ENCODE measurements at regions of chr7 and their contacts with region 1.

Region 1: GRCh38 chr7:92652536-92652935 is 62.3 kb upstream of the FAM133B start:
- DNase-seq: peak in 1 of 2 experiments; percentile 81
- H3K4me3 ChIP-seq: no peak overlapping the region
- H3K27ac ChIP-seq: peak overlapping the region; percentile 28
- H3K4me1 ChIP-seq: peaks cover 18% of the 10 kb centered on the region
- H3K27me3 ChIP-seq: no peaks in the 10 kb centered on the region
- CTCF ChIP-seq: no peak

Region 2: DNA sequence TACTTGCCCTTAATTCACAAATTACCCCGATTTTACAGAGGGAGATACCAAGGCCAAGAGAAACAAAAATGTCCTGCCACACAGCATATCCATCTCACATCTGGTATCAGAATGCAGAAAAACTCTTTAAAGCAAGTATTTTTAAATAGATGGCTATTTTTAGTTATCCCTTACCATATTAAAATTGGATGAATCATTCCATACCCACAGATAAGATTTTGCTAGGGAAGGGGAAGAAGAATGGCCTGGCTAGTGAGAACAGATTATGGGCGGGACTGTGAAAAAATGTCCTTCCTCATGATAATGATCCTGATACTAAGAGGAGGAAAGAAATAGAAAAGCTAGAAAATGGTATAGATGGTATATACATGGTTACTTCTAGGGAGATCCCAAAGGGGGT is 285.8 kb before region 1 on chr7:
- CTCF ChIA-PET with region 1: no interaction called
- POLR2A ChIA-PET with region 1: no interaction called
- intact Hi-C with region 1: no loop called
- DNase-seq: no peak
- H3K4me3 ChIP-seq: no peak overlapping the region
- H3K27ac ChIP-seq: no peak overlapping the region
- H3K4me1 ChIP-seq: no peaks in the 10 kb centered on the region
- H3K27me3 ChIP-seq: no peaks in the 10 kb centered on the region
- CTCF ChIP-seq: no peak

Region 3: GRCh38 chr7:92641921-92642511 is 10.5 kb before region 1 on chr7:
- CTCF ChIA-PET with region 1: no interaction called
- POLR2A ChIA-PET with region 1: interaction called, 14 read pairs
- intact Hi-C with region 1: no loop called
- DNase-seq: no peak
- H3K4me3 ChIP-seq: no peak overlapping the region
- H3K27ac ChIP-seq: 0 out of 2 replicates have a peak overlapping the region, but pooled peaks have one; percentile 9
- H3K4me1 ChIP-seq: peaks cover 19% of the 10 kb centered on the region
- H3K27me3 ChIP-seq: no peaks in the 10 kb centered on the region
- CTCF ChIP-seq: no peak

Region 4: DNA sequence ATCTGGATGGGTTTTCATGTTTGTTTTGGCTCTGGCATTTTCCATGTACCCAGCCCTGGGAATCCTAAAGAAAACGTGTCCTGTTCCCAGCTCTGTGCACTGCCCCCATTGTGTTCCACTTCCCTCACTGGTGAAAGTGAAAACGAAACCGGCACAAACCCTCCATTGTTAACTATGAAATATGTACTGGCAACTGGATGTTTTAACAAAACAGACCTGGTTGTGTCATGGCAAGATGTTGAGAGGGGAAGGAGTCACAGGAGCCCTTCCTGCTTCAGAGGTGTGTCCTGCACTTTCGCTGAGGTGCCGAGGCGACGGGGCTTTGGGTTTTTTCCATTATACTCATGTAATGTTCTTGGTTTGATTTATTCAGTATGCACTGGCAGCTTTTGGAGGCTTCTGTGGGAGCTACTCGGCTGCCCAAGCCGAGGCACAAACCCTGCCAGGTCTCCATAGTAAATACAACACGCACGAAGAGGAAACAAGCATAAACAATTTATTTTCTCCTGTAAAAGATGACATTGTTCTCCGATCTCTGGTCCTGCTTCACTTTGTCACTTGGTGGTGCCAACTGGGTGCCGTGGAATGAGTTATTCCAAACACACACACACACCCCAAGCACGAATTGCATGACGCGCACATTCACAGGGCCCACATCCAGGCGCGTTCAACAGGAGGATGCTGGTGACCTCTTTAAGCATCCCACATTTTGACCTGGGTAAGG is 65.6 kb after region 1 on chr7:
- CTCF ChIA-PET with region 1: no interaction called
- POLR2A ChIA-PET with region 1: no interaction called
- intact Hi-C with region 1: no loop called
- DNase-seq: peak in 1 of 2 experiments; percentile 26
- H3K4me3 ChIP-seq: no peak overlapping the region
- H3K27ac ChIP-seq: no peak overlapping the region
- H3K4me1 ChIP-seq: no peaks in the 10 kb centered on the region
- H3K27me3 ChIP-seq: no peaks in the 10 kb centered on the region
- CTCF ChIP-seq: no peak

Region 5: DNA sequence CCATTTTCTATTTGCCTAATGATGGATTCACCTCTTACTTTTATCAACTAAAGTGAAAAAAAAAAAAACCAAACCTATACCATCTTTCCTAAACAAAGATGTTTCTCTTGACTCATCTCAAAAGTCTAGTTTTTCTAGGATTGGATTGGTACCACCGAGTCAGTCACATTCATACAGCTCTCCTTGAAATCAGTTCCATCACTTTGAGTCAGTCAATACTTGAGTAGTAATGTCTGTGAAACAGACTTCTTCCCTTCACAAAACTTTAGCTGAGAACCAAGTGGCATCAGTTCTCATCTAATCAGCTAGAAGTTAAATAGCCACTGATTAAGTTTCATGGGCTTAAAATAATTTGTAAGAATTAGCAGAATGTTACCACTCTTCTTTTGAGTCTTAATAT is 170.5 kb after region 1 on chr7:
- CTCF ChIA-PET with region 1: interaction called, 11 read pairs
- POLR2A ChIA-PET with region 1: no interaction called
- intact Hi-C with region 1: no loop called
- DNase-seq: no peak
- H3K4me3 ChIP-seq: no peak overlapping the region
- H3K27ac ChIP-seq: no peak overlapping the region
- H3K4me1 ChIP-seq: no peaks in the 10 kb centered on the region
- H3K27me3 ChIP-seq: no peaks in the 10 kb centered on the region
- CTCF ChIP-seq: no peak

Measured in PC-9 (cell line).